Aorta (tissue), 5 donors: ENCODE measurements at regions of chr11 and their contacts with region 1.

Region 1: GRCh38 chr11:2885676-2886081 is at the start of gene CDKN1C:
- DNase-seq: peak; percentile 90 to 94
- ATAC-seq: peak; percentile 88
- H3K4me3 ChIP-seq: peak within 1 kb of the TSS; percentile 81 to 84
- H3K27ac ChIP-seq: peak within 1 kb of the TSS in 1 of 2 donors; percentile 55
- H3K4me1 ChIP-seq: no peaks in the 10 kb centered on the region
- H3K27me3 ChIP-seq: no peaks in the 10 kb centered on the region
- total RNA-seq, gene CDKN1C: 13.7 to 37.7 TPM

Region 2: DNA sequence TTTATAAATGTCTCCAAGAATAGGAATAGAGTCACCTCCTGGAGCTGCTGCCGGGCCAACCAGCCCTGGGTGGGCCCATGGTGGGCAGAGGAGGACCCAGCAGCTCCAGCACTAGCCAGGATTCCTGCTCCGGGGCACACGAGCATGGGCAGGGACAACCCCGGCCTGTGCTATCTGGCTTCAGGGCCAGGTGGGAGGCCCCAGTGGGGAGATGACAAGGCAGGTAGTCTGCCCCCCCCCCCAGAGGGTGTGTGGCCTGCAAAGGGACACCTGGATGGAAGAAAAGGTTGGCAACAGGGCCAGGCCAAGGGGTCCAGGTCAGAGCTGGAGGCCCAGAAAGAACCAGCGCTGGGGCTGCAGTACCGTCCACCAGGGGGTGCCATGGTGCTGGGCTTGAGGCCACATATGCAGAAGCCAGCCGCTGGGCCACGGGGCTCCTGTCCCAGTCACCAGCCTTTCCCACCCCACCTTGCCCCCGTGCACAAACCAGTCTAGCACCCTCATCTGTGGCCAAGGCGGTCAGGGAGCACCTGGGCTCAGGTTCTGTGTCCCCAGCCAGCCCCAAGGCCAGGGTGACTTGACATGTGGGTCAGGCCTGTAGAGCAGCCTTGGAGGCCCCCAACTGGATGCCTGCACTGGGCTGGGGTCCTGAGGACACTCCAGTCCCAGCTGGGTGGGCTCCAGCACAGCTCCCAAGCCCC is 580.4 kb before region 1 on chr11:
- intact Hi-C with region 1: loop called in 1 of 2 experiments (anchors 5 kb)
- DNase-seq: peak; percentile 92 to 96
- ATAC-seq: peak; percentile 85
- H3K4me3 ChIP-seq: no peak overlapping the region
- H3K27ac ChIP-seq: no peak overlapping the region
- H3K4me1 ChIP-seq: no peaks in the 10 kb centered on the region
- H3K27me3 ChIP-seq: no peaks in the 10 kb centered on the region

Region 3: DNA sequence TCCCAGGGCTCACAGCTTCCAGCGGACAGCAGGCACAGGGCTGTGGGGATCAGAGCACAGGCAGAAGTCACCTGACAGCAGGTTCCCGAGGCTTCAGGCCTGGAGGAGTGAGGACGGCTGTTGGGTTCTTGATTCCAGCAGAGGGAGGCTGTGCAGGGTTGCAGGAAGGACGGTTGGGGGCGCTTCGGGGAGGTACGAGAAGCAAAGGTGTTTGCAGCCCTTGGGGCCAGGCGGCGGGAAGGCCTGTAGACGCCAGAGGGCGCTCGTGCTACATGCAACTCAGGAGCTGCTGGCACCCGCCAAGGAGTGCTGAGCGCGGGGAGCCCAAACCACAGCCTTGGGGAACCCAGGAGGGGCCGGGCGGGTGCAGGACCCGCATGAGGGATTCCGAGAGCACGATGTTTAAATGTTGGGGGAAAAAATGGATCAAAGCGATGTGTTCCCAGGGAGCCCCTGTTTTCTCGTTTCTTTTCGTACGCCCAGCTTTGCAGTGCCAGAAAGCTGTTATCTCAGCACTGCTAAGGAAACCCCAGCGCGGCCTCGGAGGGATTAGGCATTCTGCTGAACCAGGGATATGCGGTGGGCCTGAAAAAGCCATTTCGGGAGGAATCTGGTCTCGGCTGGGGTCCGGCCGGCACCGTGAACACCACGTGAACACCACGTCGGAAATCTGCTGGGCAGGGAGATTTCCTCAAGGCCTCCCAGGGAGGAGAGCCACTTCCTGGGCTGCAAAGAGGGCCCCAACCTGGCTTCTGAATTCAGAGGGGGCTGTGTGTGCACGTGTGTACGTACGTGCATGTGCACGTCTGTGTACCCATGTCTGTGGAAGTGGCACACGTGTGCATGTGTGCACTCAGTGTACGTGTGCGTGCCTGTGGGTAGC is 352.7 kb before region 1 on chr11:
- intact Hi-C with region 1: loop called (anchors 1 kb)
- DNase-seq: peak; percentile 94 to 98
- ATAC-seq: peak; percentile 91
- H3K4me3 ChIP-seq: no peak overlapping the region
- H3K27ac ChIP-seq: no peak overlapping the region
- H3K4me1 ChIP-seq: no peaks in the 10 kb centered on the region
- H3K27me3 ChIP-seq: no peaks in the 10 kb centered on the region

Region 4: DNA sequence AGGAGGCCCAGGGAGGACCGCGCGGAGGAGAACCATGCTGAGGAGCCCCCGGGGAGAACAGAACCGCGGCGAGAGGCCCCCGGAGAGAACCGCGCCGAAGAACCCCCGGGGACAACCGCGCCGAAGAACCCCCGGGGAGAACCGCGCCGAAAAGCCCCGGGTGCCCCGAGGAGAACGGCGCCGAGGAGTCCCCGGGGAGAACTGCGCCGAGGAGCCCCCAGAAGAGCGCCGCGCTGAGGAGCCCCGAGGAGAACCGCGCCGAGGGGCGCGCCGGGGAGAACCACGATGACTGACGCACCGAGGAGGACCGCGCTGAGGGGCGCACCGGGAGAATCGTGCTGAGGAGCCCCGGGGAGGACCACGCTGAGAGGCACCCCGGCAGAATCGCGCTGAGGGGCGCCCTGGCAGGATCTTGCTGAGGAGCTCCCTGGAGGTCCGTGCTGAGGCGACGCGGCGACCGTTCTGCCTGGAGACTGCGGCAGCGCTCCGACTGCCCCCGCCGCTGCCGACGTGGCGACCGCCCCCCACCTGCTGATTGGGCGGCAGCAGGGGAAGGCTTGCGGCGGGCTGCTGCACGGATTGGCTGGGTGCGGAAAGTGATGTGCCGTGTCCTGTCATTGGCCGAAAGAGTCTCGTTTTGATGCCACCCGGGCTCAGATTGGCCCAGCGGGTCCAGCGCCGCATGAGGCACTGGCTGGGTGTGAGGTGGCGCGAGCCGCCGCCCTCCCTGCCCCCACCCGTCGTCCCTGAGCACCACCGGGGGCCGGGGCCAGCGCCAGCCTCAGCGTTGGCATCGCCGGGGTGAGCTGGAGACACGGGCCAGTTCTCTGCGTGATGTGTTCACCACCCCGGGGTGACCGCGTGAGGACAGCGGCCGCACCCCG is 185.9 kb before region 1 on chr11 and contains the start of gene KCNQ1OT1:
- intact Hi-C with region 1: loop called in 1 of 2 experiments (anchors 5 kb)
- DNase-seq: peak; percentile 94
- ATAC-seq: peak; percentile 94
- H3K4me3 ChIP-seq: peak within 1 kb of the TSS; percentile 5 to 63
- H3K27ac ChIP-seq: peak within 1 kb of the TSS; percentile 5 to 38
- H3K4me1 ChIP-seq: no peaks in the 10 kb centered on the region
- H3K27me3 ChIP-seq: no peaks in the 10 kb centered on the region
- total RNA-seq, gene KCNQ1OT1: 2.3 to 5.4 TPM

Region 5: GRCh38 chr11:2708151-2708581 is 177.5 kb before region 1 on chr11:
- intact Hi-C with region 1: loop called (anchors 5 kb)
- DNase-seq: peak in 1 of 2 donors; percentile 85
- ATAC-seq: peak; percentile 62
- H3K4me3 ChIP-seq: no peak overlapping the region
- H3K27ac ChIP-seq: no peak overlapping the region
- H3K4me1 ChIP-seq: no peaks in the 10 kb centered on the region
- H3K27me3 ChIP-seq: no peaks in the 10 kb centered on the region

Region 6: DNA sequence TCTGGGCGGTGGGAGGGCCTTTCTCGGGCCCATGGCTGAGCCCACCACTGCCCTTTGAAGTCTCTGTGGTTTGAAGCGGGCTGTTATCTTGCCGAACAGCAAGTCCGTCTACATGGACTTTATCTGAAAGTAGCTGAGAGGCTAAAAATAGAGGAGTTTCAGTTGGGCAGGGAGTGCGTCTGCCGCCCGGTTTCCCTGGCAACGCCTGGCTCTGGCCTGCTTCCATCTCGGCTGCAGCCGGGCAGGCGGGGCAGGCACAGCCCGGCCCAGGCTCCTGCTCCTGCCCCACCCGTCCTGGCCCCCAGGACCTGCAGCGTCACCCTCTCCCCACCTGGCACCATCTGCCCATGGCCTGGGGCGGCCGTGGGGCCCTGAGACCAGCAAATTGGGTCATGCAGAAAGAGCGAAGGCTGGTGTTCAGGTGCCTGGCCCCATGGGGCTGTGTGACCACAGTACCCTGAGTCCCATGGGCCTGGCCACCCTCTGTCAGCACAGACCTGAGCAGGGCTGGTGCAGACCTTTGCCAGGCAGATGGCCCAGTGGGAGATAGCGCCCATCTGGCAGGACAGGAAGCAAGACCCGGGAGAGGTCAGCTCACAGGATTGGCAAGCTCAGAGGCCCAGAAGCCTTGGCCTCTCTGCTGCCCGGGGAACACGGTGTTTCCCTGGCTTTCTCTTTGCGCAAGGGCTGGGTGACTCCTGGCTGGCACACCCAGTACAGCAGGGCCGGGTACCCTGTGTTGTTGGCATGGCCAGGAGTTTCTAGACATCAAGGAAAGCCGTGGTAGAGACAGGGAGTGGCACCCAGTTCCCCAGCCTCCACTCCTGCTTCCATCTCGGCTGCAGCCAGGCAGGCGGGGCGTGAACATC is 106.8 kb before region 1 on chr11:
- intact Hi-C with region 1: loop called (anchors 2 to 5 kb)
- DNase-seq: peak; percentile 86 to 93
- ATAC-seq: peak; percentile 88
- H3K4me3 ChIP-seq: no peak overlapping the region
- H3K27ac ChIP-seq: peak overlapping the region in 1 of 2 donors; percentile 71
- H3K4me1 ChIP-seq: no peaks in the 10 kb centered on the region
- H3K27me3 ChIP-seq: no peaks in the 10 kb centered on the region

Region 7: DNA sequence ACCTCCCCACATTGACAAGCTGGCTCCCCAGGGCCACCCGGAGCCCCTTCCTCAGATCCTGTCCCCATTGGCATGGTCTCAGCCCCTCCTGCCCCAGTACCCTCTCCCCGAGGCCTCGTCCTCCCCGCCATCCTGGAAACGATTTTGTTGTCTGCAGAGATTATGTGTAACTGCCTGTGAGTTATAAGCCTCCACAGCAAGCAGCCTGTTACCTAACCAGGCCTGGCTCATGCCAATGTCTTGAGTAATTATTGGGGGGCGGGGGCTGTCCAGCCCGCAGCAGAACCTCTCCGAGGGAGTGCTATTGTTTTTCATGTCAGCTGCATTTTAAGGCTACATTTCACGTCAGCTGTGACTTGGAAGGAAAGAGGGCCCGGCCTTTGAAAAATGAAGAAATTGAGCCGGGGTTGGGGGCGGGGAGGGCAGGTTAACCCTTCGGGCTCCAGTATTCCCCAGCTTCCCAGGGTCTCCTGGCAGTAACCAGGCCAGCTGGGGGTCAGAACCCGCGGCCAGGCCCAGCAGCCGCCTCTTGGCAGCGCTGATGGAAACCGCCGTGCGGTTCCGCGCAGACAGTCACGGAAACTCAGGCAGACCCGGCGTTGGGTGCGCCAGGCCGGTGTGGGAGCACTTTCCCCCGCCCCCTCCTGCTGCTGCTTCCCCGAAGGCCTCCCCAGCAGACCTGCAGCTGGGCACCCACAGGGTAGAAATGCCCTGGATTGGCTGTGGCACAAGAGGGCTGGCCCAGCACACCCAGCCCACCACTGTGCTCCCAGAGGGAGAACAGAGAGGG is 59.6 kb before region 1 on chr11:
- intact Hi-C with region 1: loop called in 1 of 2 experiments (anchors 1 kb)
- DNase-seq: peak; percentile 86 to 88
- ATAC-seq: peak; percentile 91
- H3K4me3 ChIP-seq: no peak overlapping the region
- H3K27ac ChIP-seq: peak overlapping the region in 1 of 2 donors; percentile 82
- H3K4me1 ChIP-seq: no peaks in the 10 kb centered on the region
- H3K27me3 ChIP-seq: no peaks in the 10 kb centered on the region

Region 8: DNA sequence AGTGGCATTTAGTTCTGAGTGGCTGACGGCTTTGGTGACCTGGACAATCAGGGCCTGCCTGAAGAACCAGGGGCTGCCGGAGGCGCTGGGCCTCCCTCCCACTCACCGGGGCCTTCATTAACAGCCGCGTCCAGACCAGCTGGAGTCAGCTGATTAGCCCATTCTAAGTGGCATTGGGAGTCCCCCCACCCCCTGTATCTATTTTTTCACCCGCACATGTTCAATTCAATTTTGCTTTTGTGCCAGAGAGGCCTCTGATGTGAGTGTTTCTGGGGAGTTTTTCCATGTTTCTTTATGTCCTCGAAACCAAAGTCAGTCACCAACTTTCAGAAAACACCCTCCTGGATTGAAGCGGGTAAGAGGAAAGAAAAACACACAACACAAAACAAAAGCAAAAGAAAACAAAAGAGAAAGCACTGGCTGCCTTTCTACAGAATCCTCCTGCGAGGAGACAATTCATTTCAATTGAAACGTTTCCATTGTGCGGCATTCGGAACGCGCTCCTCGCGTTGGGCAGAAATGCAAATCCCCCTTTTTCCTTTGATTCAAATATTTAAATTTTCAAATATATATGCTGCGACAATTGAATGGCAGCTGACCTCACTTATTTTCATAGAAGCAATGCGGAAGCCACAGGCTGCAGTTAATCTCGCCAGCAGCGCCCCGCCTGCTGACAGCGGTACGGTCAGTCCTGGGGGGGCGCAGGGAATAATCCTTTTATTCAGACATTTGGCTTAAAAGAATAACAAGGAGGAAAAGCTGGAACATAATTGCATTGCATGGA is 17.8 kb before region 1 on chr11:
- intact Hi-C with region 1: no loop called
- DNase-seq: no peak
- ATAC-seq: no peak
- H3K4me3 ChIP-seq: no peak overlapping the region
- H3K27ac ChIP-seq: no peak overlapping the region
- H3K4me1 ChIP-seq: no peaks in the 10 kb centered on the region
- H3K27me3 ChIP-seq: no peaks in the 10 kb centered on the region

Region 9: GRCh38 chr11:3087821-3088800 is 202.4 kb after region 1 on chr11:
- intact Hi-C with region 1: no loop called
- DNase-seq: peak in 1 of 2 donors; percentile 70
- ATAC-seq: no peak
- H3K4me3 ChIP-seq: no peak overlapping the region
- H3K27ac ChIP-seq: no peak overlapping the region
- H3K4me1 ChIP-seq: no peaks in the 10 kb centered on the region
- H3K27me3 ChIP-seq: no peaks in the 10 kb centered on the region